Panc1 (cell line): ENCODE measurements at regions of chr19 and their contacts with region 1.

Region 1: DNA sequence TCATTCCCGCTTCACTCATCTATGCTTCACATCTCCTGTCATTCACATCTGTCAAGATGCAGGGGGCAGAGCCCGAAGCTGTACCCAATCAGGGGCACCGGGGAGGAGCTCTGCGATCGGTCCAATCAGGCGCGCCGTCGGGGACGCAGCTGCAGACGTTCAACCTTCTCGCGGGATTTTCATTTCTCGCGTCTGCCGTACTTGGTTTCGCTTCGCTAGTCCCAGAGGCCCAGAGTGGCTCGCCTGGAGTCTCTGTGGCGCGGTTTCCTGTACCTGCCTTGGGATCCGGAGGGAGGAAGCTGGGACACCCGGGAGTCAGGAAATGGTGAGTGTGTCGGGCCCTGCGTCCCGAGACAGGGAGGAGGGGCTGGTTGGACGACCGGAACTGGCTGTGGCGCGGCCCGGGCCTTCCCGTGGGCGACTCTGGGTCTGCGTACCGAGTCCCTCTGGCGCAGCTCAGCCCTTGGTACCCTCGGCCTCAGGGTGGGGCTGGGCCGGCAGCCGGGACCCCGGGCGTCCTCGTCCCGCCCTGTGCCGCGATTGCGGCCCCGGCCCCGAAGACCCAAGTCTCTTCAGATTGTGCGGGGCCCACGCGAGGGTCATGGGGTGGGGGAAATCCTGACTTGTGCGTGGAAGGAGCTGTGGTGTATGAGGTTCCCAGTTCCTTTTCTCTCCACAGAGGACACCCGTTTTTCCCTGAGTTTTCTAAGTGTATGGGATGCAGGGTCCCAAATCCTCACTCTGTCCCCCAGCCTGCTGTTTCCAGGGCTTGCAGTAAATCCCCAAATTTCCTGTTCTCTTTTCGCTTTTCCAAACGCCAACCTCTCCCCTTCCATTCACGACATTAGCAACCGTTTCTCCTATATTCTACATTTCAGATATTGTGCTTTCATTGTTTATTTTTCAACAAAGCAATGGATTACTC is at the start of gene ZNF136:
- DNase-seq: no peak
- ATAC-seq: peak; percentile 98
- H3K4me3 ChIP-seq: peak within 1 kb of the TSS; percentile 71 to 85
- H3K27ac ChIP-seq: peak within 1 kb of the TSS; percentile 88
- H3K4me1 ChIP-seq: no peaks in the 10 kb centered on the region
- H3K27me3 ChIP-seq: no peaks in the 10 kb centered on the region
- CTCF ChIP-seq: no peak
- total RNA-seq, gene ZNF136: 4.6 TPM

Region 2: DNA sequence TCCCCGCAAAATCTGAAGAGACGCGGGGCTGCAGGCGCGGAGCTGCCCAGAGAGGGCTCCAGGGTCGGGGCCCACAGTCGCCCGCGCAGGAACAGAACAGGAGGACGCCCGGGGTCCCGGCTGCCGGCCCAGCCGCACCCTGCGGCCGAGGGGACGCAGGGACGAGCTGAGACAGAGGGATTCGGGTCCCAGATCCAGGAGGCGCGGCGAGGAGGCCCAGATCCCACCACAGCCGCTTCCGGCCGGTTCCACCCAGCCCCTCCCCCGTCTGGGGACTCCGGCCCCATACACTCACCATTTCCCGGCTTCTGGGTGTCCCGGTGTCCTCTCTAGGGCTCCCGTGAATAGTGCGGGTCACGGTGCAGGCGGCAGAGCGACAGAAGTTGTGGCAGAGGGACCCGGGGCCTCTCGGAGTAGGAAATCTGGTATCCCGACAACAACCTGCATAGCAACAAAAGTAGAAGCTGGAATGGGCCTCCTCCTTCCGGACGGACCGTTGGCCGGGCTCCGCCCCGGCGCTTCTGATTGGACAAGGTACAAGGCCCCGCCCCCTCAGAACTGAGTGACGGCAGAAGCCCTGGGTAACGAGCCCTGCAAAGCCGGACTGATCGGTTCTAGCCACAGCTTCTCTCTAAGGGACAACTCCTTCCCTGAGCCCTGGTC is 23.1 kb before region 1 on chr19 and contains the start of gene ZNF20:
- CTCF ChIA-PET with region 1: no interaction called
- POLR2A ChIA-PET with region 1: no interaction called
- in situ Hi-C with region 1: no loop called
- intact Hi-C with region 1: no loop called
- DNase-seq: no peak
- ATAC-seq: peak; percentile 98
- H3K4me3 ChIP-seq: peak within 1 kb of the TSS; percentile 75 to 79
- H3K27ac ChIP-seq: peak within 1 kb of the TSS; percentile 84
- H3K4me1 ChIP-seq: peaks cover 5% of the 10 kb centered on the region; the same call in 1 of the 2 replicates
- H3K27me3 ChIP-seq: no peaks in the 10 kb centered on the region
- CTCF ChIP-seq: no peak
- total RNA-seq, gene ZNF20: 4.9 TPM

Region 3: DNA sequence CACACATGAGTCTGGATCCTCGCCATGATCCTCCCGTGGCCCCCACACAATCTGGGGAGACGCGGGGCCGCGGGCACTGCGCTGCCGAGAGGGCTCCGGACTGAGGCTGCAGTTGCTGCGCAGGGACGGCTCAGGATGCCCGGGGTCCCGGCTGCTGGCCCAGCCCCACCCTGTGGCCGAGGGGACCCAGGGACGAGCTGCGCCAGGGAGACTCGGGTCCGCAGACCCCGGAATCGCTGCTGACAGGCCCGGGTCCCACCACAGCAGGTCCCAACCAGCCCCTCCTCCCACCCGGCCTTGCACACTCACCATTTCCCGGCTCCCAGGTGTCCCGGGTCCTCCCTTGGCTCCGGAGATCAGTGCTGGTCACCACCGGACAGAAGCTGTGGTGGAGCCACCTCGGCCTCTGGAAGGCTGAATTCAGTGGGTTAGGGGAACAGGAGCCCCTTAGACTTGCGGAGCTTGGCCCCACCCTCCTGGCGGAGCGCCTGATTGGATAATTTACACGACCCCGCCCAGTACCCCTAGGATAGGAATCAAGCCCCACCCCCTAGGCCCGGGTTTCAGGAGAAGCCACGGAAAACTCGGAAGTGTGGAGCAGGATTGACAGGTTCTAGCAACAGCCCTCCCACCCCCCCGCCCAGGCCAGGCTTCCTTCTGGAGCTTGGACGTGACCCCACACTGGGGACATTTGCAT is 74.1 kb after region 1 on chr19:
- CTCF ChIA-PET with region 1: no interaction called
- POLR2A ChIA-PET with region 1: interaction called, 10 read pairs
- in situ Hi-C with region 1: no loop called
- intact Hi-C with region 1: no loop called
- DNase-seq: no peak
- ATAC-seq: no peak
- H3K4me3 ChIP-seq: no peak overlapping the region
- H3K27ac ChIP-seq: no peak overlapping the region
- H3K4me1 ChIP-seq: no peaks in the 10 kb centered on the region
- H3K27me3 ChIP-seq: no peaks in the 10 kb centered on the region
- CTCF ChIP-seq: no peak

Region 4: DNA sequence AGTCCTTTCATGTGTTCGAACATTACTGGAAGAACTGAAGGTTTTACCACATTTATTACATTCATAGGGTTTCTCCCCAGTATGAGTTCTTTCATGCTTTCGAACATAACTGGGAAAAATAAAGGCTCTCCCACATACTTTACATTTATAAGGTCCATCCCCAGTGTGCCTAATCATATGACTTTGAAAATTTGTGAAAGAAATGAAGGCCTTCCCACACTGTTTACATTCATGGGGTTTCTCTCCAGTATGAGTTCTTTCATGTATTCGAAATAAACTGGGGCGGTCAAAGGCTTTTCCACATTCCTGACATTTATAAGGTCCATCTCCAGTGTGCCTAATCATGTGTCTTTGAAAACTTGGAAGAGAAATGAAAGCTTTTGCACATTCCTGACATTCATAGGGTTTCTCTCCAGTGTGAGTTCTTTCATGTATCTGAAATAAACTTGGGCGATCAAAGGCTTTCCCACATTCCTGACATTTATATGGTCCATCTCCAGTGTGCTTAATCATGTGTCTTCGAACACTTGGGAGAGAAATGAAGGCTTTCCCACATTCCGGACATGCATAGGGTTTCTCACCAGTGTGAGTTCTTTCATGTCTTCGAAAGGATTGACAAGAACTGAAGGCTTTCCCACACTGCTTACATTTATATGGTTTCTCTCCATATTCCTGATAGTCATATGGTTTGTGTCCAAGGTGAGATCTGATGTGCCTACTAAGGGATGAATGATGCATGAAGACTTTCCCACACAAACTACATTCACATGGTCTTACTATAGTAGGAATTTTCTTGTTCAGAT is 364.1 kb after region 1 on chr19:
- CTCF ChIA-PET with region 1: no interaction called
- POLR2A ChIA-PET with region 1: interaction called, 15 read pairs
- in situ Hi-C with region 1: no loop called
- intact Hi-C with region 1: no loop called
- DNase-seq: no peak
- ATAC-seq: no peak
- H3K4me3 ChIP-seq: no peak overlapping the region
- H3K27ac ChIP-seq: no peak overlapping the region
- H3K4me1 ChIP-seq: no peaks in the 10 kb centered on the region
- H3K27me3 ChIP-seq: no peaks in the 10 kb centered on the region
- CTCF ChIP-seq: no peak